B cell (primary cell): ENCODE measurements at regions of chr11 and their contacts with region 1.

Region 1: DNA sequence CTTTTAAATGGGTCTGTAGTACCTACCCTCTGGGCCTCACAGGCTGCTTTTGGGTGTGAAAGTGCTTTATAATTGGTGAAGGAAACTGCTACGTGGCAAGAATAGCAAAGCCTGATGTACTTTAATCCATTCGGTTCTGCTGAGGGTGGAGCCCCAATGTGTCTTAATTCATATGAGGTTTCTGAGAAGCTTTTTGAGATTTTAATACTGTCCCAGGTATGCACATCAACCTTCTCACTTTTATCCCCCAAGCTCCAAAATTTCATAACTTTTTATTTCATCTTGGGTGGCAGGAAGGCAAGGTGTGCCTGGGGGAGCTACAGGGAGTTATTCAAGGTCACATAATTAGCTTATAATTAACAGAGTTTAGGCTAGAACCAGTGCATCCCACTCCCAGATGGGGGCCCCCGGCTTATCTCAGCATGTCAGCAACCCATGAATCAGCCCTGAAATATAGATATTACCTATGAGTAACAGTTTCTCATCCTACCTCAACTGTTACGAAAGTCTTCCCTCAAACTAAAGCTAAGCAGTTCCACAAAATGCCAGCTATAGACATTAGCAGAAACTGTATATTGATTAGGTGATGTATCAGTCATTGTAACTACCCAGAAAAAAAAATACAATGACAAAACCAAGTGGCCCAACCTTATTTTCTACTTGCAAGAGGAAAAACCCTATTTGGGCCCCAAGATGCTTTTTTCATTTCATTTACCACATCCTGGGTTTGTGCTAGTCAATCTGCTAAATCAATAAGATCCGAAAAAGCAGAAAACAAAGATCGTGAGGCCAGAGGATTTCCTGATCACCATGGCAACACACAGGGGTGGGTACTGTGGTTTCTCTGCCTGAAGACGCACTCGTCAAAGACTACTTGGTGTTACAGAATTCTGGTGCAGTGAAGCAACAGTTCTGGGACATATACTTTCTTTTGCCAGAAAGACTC is 26.7 kb downstream of the CD44 start:
- DNase-seq: peak; percentile 95
- ATAC-seq: peak; percentile 73
- H3K4me3 ChIP-seq: peak overlapping the region in 4 of 5 experiments; percentile 20 to 57 (median 35)
- H3K4me3 Mint-ChIP-seq: peak overlapping the region; percentile 86
- H3K27ac ChIP-seq: peak overlapping the region; percentile 96 to 98
- H3K27ac Mint-ChIP-seq: peak overlapping the region; percentile 97
- H3K4me1 ChIP-seq: peaks cover 97 to 98% of the 10 kb centered on the region in 2 donors
- H3K4me1 Mint-ChIP-seq: peaks cover 100% of the 10 kb centered on the region
- H3K27me3 ChIP-seq: no peaks in the 10 kb centered on the region
- H3K27me3 Mint-ChIP-seq: no peaks in the 10 kb centered on the region
- CTCF ChIP-seq: no peak

Region 2: DNA sequence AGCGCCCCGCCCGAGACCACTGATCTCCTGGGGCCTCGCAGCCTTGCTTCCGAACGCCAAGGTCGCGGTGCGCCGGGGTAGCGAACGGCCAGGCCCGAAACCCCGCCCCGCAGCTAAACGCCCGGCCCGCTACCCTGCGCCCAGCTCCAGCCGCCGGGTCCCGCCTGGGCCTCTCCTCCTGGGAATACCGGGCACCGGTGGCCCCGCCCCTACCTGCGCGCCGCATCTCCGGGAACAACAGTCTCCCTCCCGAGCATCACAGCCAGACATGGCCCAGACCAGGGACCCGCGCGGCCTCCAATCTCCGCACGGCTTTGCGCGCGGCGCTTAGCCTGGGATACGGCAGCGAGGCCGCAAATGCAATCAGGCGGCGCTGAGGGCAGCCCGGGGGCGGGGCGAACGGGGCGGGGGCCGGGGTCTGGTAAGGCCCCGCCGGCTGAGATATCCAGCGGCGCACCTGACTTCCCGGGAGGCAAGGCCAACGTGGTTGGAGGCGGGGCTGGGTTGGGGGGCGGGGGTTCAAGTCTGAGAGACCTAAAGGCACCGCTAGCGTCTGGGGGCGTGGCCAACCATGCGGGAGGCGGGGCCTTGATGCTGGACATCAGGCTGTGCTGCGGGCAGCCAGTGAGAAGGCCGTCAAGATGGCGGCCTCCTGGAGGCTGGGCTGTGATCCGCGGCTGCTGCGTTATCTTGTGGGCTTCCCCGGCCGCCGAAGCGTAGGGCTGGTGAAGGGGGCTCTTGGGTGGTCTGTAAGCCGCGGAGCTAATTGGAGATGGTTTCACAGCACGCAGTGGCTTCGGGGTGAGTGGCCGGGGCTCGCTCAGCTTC is 249.5 kb before region 1 on chr11 and contains the starts of genes APIP and PDHX:
- CTCF ChIA-PET with region 1: interaction called, 4 read pairs
- POLR2A ChIA-PET with region 1: interaction called, 3 read pairs
- intact Hi-C with region 1: loop called (anchors 5 kb)
- DNase-seq: peak; percentile 94
- ATAC-seq: peak; percentile 93
- H3K4me3 ChIP-seq: peak within 1 kb of the TSS; percentile 64 to 95 (median 85)
- H3K4me3 Mint-ChIP-seq: peak within 1 kb of the TSS; percentile 99
- H3K27ac ChIP-seq: peak within 1 kb of the TSS; percentile 84 to 85
- H3K27ac Mint-ChIP-seq: peak within 1 kb of the TSS; percentile 97
- H3K4me1 ChIP-seq: peaks cover 10 to 18% of the 10 kb centered on the region in 2 donors
- H3K4me1 Mint-ChIP-seq: peaks cover 33% of the 10 kb centered on the region
- H3K27me3 ChIP-seq: no peaks in the 10 kb centered on the region
- H3K27me3 Mint-ChIP-seq: no peaks in the 10 kb centered on the region
- CTCF ChIP-seq: no peak
- total RNA-seq, gene APIP: 18.5 and 19.4 TPM in 2 replicates
- total RNA-seq, gene PDHX: 25.8 and 35.4 TPM in 2 replicates

Region 3: DNA sequence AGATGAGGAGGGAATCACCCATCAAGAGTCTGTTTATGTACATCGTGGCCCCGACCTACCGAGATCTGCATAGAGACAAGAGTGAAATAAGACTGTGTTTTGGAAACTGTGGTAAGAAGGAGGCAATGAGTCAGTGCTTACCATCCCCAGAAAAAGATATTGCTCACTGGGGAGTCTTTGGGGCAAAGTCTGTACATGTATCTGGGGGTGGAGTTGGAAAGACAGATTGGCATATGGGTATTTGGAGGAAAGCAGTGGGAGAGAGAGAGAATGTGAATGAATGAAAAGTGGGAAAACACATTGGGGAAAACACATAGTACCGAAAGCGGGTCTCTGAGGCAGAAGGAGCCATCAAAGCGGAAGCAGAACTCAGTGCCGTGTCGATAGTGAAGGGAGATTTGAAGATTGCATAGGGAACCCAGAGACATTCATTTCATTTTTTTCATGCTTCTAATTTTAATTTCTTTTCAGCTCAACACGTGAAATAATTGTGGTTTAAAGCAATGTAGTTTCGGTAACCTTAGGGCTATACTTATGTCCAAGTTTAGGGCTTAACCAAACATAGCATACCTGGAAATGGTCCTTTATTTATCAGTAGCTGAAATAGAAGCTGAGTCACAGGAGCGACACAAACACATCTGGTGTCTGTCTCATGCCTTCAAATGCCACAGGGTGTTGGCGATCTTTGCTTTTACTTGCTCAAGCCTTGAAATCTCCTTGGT is 125.3 kb before region 1 on chr11:
- CTCF ChIA-PET with region 1: interaction called, 14 read pairs
- POLR2A ChIA-PET with region 1: interaction called, 3 read pairs
- intact Hi-C with region 1: loop called (anchors 1 kb)
- DNase-seq: peak; percentile 72
- ATAC-seq: peak; percentile 68
- H3K4me3 ChIP-seq: peak overlapping the region in 3 of 5 experiments; percentile 25 to 44 (median 40)
- H3K4me3 Mint-ChIP-seq: peak overlapping the region; percentile 86
- H3K27ac ChIP-seq: peak overlapping the region; percentile 41 to 66
- H3K27ac Mint-ChIP-seq: peak overlapping the region; percentile 94
- H3K4me1 ChIP-seq: peaks cover 34 to 39% of the 10 kb centered on the region in 2 donors
- H3K4me1 Mint-ChIP-seq: peaks cover 48% of the 10 kb centered on the region
- H3K27me3 ChIP-seq: no peaks in the 10 kb centered on the region
- H3K27me3 Mint-ChIP-seq: no peaks in the 10 kb centered on the region
- CTCF ChIP-seq: no peak

Region 4: GRCh38 chr11:35126000-35126878 is 39.5 kb before region 1 on chr11:
- CTCF ChIA-PET with region 1: interaction called, 6 read pairs
- POLR2A ChIA-PET with region 1: no interaction called
- intact Hi-C with region 1: loop called (anchors 5 kb)
- DNase-seq: peak; percentile 82
- ATAC-seq: peak; percentile 82
- H3K4me3 ChIP-seq: peak overlapping the region in 2 of 5 experiments; percentile 12 to 34
- H3K4me3 Mint-ChIP-seq: peak overlapping the region; percentile 29
- H3K27ac ChIP-seq: peak overlapping the region; percentile 50 to 57
- H3K27ac Mint-ChIP-seq: peak overlapping the region; percentile 74
- H3K4me1 ChIP-seq: peaks cover 49 to 60% of the 10 kb centered on the region in 2 donors
- H3K4me1 Mint-ChIP-seq: peaks cover 69% of the 10 kb centered on the region
- H3K27me3 ChIP-seq: no peaks in the 10 kb centered on the region
- H3K27me3 Mint-ChIP-seq: no peaks in the 10 kb centered on the region
- CTCF ChIP-seq: peak; percentile 38

Region 5: DNA sequence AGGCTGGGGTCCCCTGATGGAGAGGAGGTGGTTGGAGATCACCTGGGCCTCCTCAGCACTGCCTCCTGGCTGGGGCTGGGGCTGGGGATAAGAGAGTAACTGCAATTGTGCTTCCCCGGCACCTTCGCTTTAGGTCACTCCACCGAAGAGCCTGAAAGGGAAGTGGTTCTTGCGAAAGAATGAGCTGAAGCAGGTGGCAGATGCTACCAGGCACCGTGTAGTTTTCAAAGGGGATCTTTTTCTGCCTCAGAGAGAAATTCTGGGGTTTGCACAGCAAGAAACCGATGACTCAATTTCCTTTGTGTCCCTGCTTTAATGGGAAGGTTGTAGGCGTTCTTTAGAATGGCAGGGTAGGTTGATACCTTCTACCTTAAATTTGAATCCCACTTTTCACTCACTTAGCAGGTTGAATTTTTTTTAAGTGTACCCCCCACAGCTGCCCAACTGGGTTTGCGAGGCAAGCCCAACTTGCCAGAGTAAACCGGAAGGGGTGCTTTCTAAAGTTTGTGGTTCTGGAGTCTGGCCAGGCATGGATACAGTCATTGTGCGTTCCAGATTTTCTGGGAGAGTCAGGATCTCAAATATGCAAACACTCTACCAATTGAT is 21.5 kb before region 1 on chr11:
- CTCF ChIA-PET with region 1: interaction called, 48 read pairs
- POLR2A ChIA-PET with region 1: interaction called, 7 read pairs
- intact Hi-C with region 1: loop called (anchors 1 kb)
- DNase-seq: peak; percentile 90
- ATAC-seq: peak; percentile 60
- H3K4me3 ChIP-seq: peak overlapping the region; percentile 1 to 89 (median 26)
- H3K4me3 Mint-ChIP-seq: peak overlapping the region; percentile 78
- H3K27ac ChIP-seq: peak overlapping the region; percentile 79 to 87
- H3K27ac Mint-ChIP-seq: peak overlapping the region; percentile 83
- H3K4me1 ChIP-seq: peaks cover 80 to 90% of the 10 kb centered on the region in 2 donors
- H3K4me1 Mint-ChIP-seq: peaks cover 80% of the 10 kb centered on the region
- H3K27me3 ChIP-seq: no peaks in the 10 kb centered on the region
- H3K27me3 Mint-ChIP-seq: no peaks in the 10 kb centered on the region
- CTCF ChIP-seq: peak; percentile 23

Region 6: GRCh38 chr11:35182317-35182939 is 16.7 kb after region 1 on chr11:
- CTCF ChIA-PET with region 1: interaction called, 7 read pairs
- POLR2A ChIA-PET with region 1: interaction called, 3 read pairs
- intact Hi-C with region 1: loop called (anchors 2 kb)
- DNase-seq: peak; percentile 67
- ATAC-seq: peak; percentile 84
- H3K4me3 ChIP-seq: peak overlapping the region in 3 of 5 experiments; percentile 1 to 41 (median 6)
- H3K4me3 Mint-ChIP-seq: peak overlapping the region; percentile 81
- H3K27ac ChIP-seq: peak overlapping the region; percentile 68 to 80
- H3K27ac Mint-ChIP-seq: peak overlapping the region; percentile 90
- H3K4me1 ChIP-seq: peaks cover 34 to 41% of the 10 kb centered on the region in 2 donors
- H3K4me1 Mint-ChIP-seq: peaks cover 67% of the 10 kb centered on the region
- H3K27me3 ChIP-seq: no peaks in the 10 kb centered on the region
- H3K27me3 Mint-ChIP-seq: no peaks in the 10 kb centered on the region
- CTCF ChIP-seq: no peak

Region 7: DNA sequence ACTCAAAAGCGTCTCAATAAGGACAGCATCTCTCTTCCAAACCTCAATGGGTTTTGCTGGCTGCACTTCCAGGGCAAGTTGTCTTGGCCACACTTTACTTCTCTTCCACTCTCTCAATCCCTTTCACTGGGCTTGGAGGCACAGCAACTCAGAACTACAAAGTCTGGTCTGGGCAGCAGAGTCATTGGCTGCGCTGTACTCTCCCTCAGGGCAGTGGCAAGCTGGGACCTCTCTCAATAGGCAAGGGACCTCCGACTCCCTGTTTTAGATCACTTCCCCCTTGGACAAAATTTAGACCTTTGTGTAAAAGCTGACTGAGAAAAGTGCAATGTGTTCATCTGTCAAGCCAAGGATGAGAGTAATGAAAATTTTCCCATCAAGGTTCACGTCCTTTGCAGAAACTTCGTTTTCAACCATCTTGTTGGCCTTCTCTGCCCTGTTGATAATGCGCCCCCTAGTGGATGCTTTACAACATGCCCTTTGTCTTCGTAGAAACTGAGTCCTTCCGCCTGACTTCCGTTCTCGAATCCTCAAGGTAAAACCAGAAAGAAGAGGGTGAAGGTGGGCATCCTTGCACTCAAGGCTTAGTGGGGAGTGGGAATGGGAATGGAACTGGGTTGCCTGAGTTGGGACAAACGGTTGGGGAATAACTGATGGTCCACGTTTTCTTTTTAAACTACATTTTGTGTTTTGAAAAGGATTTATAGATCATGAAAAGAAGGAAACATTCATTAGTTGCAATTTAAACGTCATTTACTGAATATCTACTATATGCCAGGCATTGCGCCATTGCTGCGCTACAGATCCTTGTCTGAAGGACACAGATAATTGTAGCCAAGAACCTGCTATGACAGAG is 72.4 kb after region 1 on chr11:
- CTCF ChIA-PET with region 1: interaction called, 11 read pairs
- POLR2A ChIA-PET with region 1: interaction called, 3 read pairs
- intact Hi-C with region 1: no loop called
- DNase-seq: peak; percentile 81
- ATAC-seq: no peak
- H3K4me3 ChIP-seq: no peak overlapping the region
- H3K4me3 Mint-ChIP-seq: no peak overlapping the region
- H3K27ac ChIP-seq: no peak overlapping the region
- H3K27ac Mint-ChIP-seq: no peak overlapping the region
- H3K4me1 ChIP-seq: peaks cover 6 to 11% of the 10 kb centered on the region in 2 donors
- H3K4me1 Mint-ChIP-seq: peaks cover 22% of the 10 kb centered on the region
- H3K27me3 ChIP-seq: no peaks in the 10 kb centered on the region
- H3K27me3 Mint-ChIP-seq: no peaks in the 10 kb centered on the region
- CTCF ChIP-seq: peak; percentile 90